Lower leg skin (tissue), 4 donors: ENCODE measurements at regions of chr12 and their contacts with region 1.

Region 1: DNA sequence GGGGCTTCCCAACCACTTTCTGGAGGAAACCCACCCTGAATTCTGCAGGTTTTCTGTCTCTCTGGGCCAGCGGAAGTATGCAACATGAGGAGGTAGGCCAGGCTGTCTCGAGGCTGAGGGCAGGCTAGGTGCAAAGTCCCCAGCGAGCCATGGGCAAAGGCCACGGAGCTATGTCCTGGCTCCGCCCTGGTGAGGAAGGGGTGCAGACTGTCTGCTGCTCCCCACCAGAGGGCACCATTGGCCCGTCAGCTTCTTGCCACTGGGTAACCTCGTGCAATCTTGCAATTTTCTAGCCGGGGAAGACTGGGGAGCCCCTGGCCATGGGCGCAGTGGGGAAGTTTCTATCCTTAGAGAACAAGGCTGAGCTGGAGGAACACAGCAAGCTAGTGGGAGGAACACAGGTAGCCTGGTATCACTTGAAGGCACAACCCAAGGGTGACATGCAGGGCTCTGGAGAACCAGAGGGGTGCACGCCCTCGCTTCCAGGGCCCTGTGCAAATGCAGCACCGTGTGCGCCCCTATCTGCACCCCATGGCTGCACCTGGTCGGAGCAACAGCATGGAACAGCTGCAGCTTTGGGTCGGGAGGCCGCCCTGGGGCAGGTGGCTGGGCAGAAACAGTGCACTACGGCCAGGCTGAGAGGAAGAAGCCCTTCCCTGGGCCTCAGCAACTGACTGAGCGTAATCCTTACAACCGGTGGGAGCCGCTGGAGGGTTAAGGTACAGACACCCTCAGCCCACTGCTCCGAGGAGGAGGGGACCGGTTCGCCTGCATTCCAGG is 27.6 kb upstream of the RPLP0 start:
- DNase-seq: peak; percentile 81 to 97
- H3K4me3 ChIP-seq: no peak overlapping the region
- CTCF ChIP-seq: peak in 1 of 3 donors; percentile 95
- POLR2A ChIP-seq: no peak

Region 2: GRCh38 chr12:119145367-119145766 is 1083.1 kb before region 1 on chr12:
- intact Hi-C with region 1: no loop called
- DNase-seq: no peak
- H3K4me3 ChIP-seq: no peak overlapping the region
- CTCF ChIP-seq: no peak
- POLR2A ChIP-seq: no peak

Region 3: GRCh38 chr12:120265473-120266179 is 37.1 kb after region 1 on chr12 and contains the start of gene PXN:
- intact Hi-C with region 1: loop called (anchors 2 kb)
- DNase-seq: peak; percentile 74 to 97
- H3K4me3 ChIP-seq: peak within 1 kb of the TSS; percentile 73
- CTCF ChIP-seq: no peak
- POLR2A ChIP-seq: peak in 1 of 2 donors; percentile 25
- total RNA-seq, gene PXN: 36.3 to 54.0 (median 49.8) TPM